ENCODE measurements at regions of chr1 and their contacts with region 1.

Region 1: GRCh38 chr1:179190861-179191260 is 38.6 kb downstream of the ABL2 start:
- DNase-seq: no peak
- ATAC-seq: peak in 1 of 4 donors; percentile 42
- H3K4me3 ChIP-seq: no peak overlapping the region
- H3K27ac ChIP-seq: peak overlapping the region; percentile 18
- H3K4me1 ChIP-seq: peaks cover 32% of the 10 kb centered on the region
- H3K27me3 ChIP-seq: no peaks in the 10 kb centered on the region
- CTCF ChIP-seq: no peak

Region 2: GRCh38 chr1:179034720-179035119 is 156.1 kb before region 1 on chr1:
- intact Hi-C with region 1: loop called in 1 of 2 experiments (anchors 5 kb)
- DNase-seq: no peak
- ATAC-seq: peak in 1 of 4 donors; percentile 31
- H3K4me3 ChIP-seq: no peak overlapping the region
- H3K27ac ChIP-seq: peak overlapping the region; percentile 9
- H3K4me1 ChIP-seq: peaks cover 67% of the 10 kb centered on the region
- H3K27me3 ChIP-seq: no peaks in the 10 kb centered on the region
- CTCF ChIP-seq: no peak

Region 3: GRCh38 chr1:179121159-179121938 is 69.5 kb before region 1 on chr1:
- intact Hi-C with region 1: loop called (anchors 2 to 5 kb)
- DNase-seq: no peak
- ATAC-seq: peak in 2 of 4 donors; percentile 53 to 79
- H3K4me3 ChIP-seq: no peak overlapping the region
- H3K27ac ChIP-seq: no peak overlapping the region
- H3K4me1 ChIP-seq: no peaks in the 10 kb centered on the region
- H3K27me3 ChIP-seq: no peaks in the 10 kb centered on the region
- CTCF ChIP-seq: peak; percentile 62

Measured in psoas muscle (tissue), 8 donors.